Mammary epithelial cell (primary cell): ENCODE measurements at regions of chr1 and their contacts with region 1.

Region 1: DNA sequence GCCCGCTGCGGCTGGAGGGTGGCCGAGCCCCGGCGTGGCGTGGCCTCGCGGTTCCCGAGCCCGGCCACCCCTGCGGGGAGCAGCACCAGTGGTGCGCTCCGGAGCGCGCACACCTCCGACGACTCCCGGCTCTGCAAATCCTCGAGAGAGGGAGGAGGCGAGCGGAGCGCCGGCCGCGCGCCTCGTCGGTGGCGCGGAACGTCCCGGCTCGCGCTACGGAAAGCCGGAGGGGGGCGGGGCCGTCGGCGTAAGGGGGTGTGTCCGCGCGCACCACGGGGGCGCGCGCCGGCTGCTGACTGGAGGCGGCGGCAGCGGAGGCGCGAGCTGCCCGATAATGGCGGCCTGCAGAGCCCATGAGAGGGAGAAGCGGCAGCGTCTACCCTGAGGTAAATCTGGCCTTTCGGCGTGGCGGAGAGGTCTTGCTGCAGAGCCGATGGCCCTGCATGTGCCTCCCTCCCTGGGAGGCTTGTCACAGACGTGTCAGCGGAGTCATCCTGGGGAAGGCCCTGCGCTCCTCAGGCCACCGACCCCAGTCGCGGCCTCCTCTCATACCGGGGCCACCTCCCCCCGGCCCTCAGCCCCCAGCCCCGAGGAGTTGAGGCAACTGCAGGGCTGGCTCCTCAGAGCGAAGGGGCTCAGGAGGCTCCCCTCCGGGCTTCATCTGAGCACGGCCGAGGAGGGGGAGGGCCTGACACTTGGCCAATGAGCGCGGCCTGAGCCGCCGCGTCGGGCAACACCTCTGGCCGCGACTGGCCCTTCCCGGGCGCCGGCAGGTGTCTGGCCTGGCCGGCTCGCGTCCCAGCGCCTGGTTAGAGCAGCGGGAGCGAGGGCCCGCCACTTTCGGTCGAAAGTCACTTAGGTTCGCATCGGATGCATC is at the start of gene PDIK1L:
- DNase-seq: peak; percentile 96
- H3K4me3 ChIP-seq: peak within 1 kb of the TSS; percentile 94 to 100 (median 98)
- H3K27ac ChIP-seq: peak within 1 kb of the TSS; percentile 28
- H3K4me1 ChIP-seq: peaks cover 16% of the 10 kb centered on the region
- H3K27me3 ChIP-seq: no peaks in the 10 kb centered on the region
- CTCF ChIP-seq: no peak
- total RNA-seq, gene PDIK1L: 4.2 to 4.8 TPM

Region 2: DNA sequence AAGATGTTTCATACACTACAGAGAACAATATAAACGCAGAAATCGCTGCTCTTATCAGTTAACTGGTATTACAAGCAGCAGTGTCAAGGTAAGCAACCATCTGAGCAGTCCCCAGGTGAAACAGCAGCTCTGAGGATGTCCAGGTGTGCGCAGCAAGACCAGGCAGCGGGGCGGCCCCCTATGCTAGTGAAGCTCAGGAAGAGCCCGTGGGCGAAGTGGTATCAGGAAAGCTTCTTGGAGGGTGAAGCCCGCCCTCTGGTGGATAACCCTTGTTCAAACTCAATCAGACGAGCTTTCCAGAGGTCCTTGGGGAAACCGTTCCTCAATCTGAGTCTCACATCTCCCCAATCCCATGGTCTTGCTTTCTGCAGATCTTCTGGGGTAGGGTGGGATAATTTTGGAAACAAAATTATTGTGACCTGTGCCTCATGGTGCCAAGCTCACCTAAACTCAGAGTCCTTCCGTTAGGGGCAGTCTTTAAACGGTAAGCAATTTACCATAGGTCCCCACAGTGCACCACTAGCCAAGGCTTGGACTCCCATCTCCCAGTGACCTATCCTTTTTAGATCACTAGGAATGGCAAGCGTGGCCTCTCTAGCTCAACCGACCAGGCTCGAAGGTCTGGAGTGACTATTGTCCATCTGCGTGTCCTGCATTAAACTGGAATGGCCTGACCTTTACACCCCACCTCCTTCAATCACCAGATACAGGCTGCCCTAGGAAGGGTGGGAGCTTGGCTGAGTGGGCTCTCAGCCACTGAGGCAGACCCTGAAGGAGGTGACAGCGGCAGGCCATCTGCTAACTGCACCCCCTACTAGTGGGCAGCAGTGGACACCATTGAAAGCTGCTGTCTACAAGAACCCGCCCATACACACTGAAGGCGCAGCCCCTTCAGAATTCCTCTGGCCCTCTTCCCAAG is 33.5 kb after region 1 on chr1:
- CTCF ChIA-PET with region 1: no interaction called
- dilution Hi-C with region 1: no loop called
- in situ Hi-C with region 1: loop called (anchors 5 kb)
- intact Hi-C with region 1: no loop called
- DNase-seq: peak; percentile 62
- H3K4me3 ChIP-seq: no peak overlapping the region
- H3K27ac ChIP-seq: no peak overlapping the region
- H3K4me1 ChIP-seq: no peaks in the 10 kb centered on the region
- H3K27me3 ChIP-seq: no peaks in the 10 kb centered on the region
- CTCF ChIP-seq: peak; percentile 59 to 77

Region 3: DNA sequence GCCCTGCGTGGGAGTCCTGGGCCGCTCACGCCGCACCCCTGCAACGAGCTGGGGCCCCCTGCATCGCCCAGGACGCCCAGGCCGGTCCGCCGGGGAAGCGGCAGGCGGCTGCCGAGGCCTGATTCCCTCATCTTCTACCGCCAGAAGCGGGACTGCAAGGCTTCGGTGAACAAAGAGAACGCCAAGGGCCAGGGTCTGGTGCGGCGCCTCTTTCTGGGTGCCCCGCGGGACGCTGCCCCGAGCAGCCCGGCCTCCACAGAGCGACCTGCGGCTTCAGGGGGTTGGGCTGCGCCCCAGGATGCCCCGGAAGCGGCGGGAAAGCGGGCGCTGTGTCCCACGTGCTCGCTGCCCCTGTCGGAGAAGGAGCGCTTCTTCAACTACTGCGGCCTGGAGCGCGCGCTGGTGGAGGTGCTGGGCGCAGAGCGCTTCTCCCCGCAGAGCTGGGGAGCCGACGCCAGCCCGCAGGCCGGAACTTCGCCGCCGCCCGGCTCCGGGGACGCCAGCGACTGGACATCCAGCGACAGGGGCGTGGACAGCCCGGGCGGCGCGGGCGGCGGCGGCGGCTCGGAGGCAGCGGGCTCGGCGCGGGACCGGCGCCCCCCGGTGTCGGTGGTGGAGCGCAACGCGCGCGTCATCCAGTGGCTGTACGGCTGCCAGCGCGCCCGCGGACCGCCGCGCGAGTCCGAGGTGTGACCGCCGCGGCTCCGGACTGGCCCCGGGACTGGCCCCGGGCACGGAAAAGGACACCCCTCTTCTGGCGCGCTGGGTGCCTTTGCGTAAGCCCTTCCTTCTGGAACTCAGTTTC is 49.8 kb after region 1 on chr1:
- CTCF ChIA-PET with region 1: no interaction called
- dilution Hi-C with region 1: no loop called
- in situ Hi-C with region 1: no loop called
- intact Hi-C with region 1: loop called (anchors 2 kb)
- DNase-seq: peak; percentile 47
- H3K4me3 ChIP-seq: peak overlapping the region; percentile 27 to 47 (median 43)
- H3K27ac ChIP-seq: no peak overlapping the region
- H3K4me1 ChIP-seq: peaks cover 23% of the 10 kb centered on the region
- H3K27me3 ChIP-seq: no peaks in the 10 kb centered on the region
- CTCF ChIP-seq: peak in 1 of 2 donors; percentile 2

Region 4: GRCh38 chr1:26233903-26234643 is 122.3 kb after region 1 on chr1 and contains the start of gene CEP85:
- CTCF ChIA-PET with region 1: interaction called, 3 read pairs
- dilution Hi-C with region 1: no loop called
- in situ Hi-C with region 1: no loop called
- intact Hi-C with region 1: loop called (anchors 2 kb)
- DNase-seq: peak; percentile 97
- H3K4me3 ChIP-seq: peak within 1 kb of the TSS; percentile 79 to 97 (median 87)
- H3K27ac ChIP-seq: peak within 1 kb of the TSS; percentile 66
- H3K4me1 ChIP-seq: peaks cover 16% of the 10 kb centered on the region
- H3K27me3 ChIP-seq: no peaks in the 10 kb centered on the region
- CTCF ChIP-seq: peak; percentile 88 to 96
- total RNA-seq, gene CEP85: 14.3 to 16.9 TPM